ENCODE measurements at regions of chr6 and their contacts with region 1.

Region 1: DNA sequence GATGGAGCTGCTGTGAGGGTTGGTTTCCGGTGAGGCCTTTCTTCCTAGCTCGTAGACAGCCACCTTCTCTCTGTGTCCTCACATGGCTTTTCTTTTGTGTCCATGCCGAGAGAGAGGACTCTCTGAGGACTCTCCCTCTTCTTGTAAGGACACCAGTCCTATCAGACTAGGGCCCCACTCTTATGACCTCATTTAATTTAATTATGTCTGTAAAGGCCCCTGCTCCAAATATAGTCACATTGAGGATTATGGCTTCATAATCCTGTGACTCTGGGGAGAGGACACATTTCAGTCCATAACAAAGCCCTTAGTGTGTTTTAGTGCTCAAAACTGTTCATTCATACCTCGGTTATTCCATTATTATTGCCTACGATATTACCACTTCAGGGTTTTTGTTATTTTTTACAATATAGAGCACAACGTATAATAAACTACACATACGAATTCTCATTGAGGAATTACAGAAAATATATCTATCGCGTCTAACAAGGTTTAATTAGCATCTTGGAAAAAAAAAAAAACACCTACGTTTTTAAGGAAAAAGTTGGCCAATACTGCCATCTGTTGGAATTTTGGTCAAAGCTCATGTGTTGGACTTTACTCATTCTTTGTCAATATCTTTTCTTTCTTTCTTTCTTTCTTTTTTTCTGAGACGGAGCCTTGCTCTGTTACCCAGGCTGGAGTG is 20.0 kb upstream of the TFAP2A start:
- DNase-seq: no peak
- H3K4me3 ChIP-seq: no peak overlapping the region
- H3K27ac ChIP-seq: no peak overlapping the region
- H3K4me1 ChIP-seq: peaks cover 0 to 2% (median 0%) of the 10 kb centered on the region in 4 donors
- H3K27me3 ChIP-seq: peaks cover 0 to 41% (median 0%) of the 10 kb centered on the region in 4 donors
- CTCF ChIP-seq: peak; percentile 44 to 66 (median 53)
- EP300 ChIP-seq: no peak
- POLR2A ChIP-seq: no peak

Region 2: GRCh38 chr6:8983188-8983688 is 1451.6 kb before region 1 on chr6:
- intact Hi-C with region 1: loop called (anchors 5 kb)
- DNase-seq: no peak
- H3K4me3 ChIP-seq: no peak overlapping the region
- H3K27ac ChIP-seq: no peak overlapping the region
- H3K4me1 ChIP-seq: no peaks in the 10 kb centered on the region
- H3K27me3 ChIP-seq: no peaks in the 10 kb centered on the region
- CTCF ChIP-seq: peak in 2 of 3 experiments; percentile 77 to 88
- EP300 ChIP-seq: no peak
- POLR2A ChIP-seq: no peak